ENCODE measurements at regions of chr5 and their contacts with region 1.

Region 1: GRCh38 chr5:11496137-11496719 is 408.0 kb downstream of the CTNND2 start:
- DNase-seq: no peak

Region 2: GRCh38 chr5:10812218-10812617 is 684.0 kb before region 1 on chr5:
- intact Hi-C with region 1: loop called in 1 of 2 experiments (anchors 5 kb)
- DNase-seq: no peak

Region 3: GRCh38 chr5:11212706-11213105 is 283.5 kb before region 1 on chr5:
- intact Hi-C with region 1: no loop called
- DNase-seq: no peak

Region 4: GRCh38 chr5:11390291-11391098 is 105.7 kb before region 1 on chr5:
- intact Hi-C with region 1: no loop called
- DNase-seq: no peak

Region 5: GRCh38 chr5:11531811-11532555 is 35.8 kb after region 1 on chr5:
- intact Hi-C with region 1: no loop called
- DNase-seq: no peak

Measured in posterior vena cava (tissue), 2 donors.